Astrocyte of the cerebellum (primary cell): ENCODE measurements at regions of chr3 and their contacts with region 1.

Region 1: GRCh38 chr3:12658593-12659058 is 5.3 kb downstream of the RAF1 start:
- DNase-seq: peak; percentile 89
- H3K4me3 ChIP-seq: no peak overlapping the region
- CTCF ChIP-seq: no peak

Region 2: DNA sequence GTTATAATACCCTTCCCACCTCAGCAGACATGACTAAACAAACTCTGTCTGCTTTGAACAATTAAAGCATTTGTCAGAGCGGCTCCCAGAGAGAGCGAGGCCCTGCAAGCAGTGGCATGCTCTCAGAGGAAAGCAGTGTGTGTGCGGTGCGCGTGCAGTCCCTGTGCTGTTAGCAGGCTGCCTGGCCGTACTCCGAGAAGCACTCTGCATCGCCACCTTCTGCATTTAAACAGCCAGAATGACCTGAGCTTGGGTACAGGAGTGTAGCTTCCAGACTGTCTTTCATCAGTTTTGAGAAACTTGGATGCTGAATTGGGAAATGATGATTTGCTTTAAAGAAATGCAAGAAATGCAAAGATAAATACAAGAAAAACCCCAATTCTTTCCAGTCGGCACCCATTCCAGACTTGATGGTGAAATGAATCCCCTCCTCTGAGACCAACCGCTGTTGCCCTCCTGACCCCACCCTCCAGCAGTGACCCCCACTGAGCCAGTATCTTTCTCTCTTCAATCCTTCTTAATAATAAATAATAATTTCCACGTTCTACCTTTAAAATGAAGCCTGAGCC is 1128.4 kb before region 1 on chr3:
- in situ Hi-C with region 1: no loop called
- DNase-seq: peak; percentile 96
- H3K4me3 ChIP-seq: no peak overlapping the region
- CTCF ChIP-seq: peak; percentile 15

Region 3: GRCh38 chr3:12608376-12608775 is 50.2 kb before region 1 on chr3:
- in situ Hi-C with region 1: loop called (anchors 5 kb)
- DNase-seq: no peak
- H3K4me3 ChIP-seq: no peak overlapping the region
- CTCF ChIP-seq: no peak